ENCODE measurements at regions of chr22 and their contacts with region 1.

Region 1: GRCh38 chr22:24805790-24806662 is at the start of gene SGSM1:
- DNase-seq: peak; percentile 48 to 89 (median 71)
- ATAC-seq: peak; percentile 91
- H3K4me3 ChIP-seq: peak within 1 kb of the TSS; percentile 70
- H3K4me3 Mint-ChIP-seq: peak within 1 kb of the TSS; percentile 75
- H3K27ac ChIP-seq: peak within 1 kb of the TSS; percentile 30 to 46
- H3K27ac Mint-ChIP-seq: peak within 1 kb of the TSS; percentile 2
- H3K4me1 ChIP-seq: peaks cover 4% of the 10 kb centered on the region
- H3K4me1 Mint-ChIP-seq: peaks cover 9% of the 10 kb centered on the region
- H3K27me3 ChIP-seq: no peaks in the 10 kb centered on the region
- H3K27me3 Mint-ChIP-seq: no peaks in the 10 kb centered on the region
- CTCF ChIP-seq: no peak
- total RNA-seq, gene SGSM1: 0.84 to 1.7 TPM

Region 2: GRCh38 chr22:24791362-24791761 is 14.7 kb before region 1 on chr22:
- CTCF ChIA-PET with region 1: interaction called, 21 read pairs
- POLR2A ChIA-PET with region 1: no interaction called
- intact Hi-C with region 1: no loop called
- DNase-seq: no peak
- ATAC-seq: no peak
- H3K4me3 ChIP-seq: no peak overlapping the region
- H3K4me3 Mint-ChIP-seq: no peak overlapping the region
- H3K27ac ChIP-seq: no peak overlapping the region
- H3K27ac Mint-ChIP-seq: no peak overlapping the region
- H3K4me1 ChIP-seq: no peaks in the 10 kb centered on the region
- H3K4me1 Mint-ChIP-seq: no peaks in the 10 kb centered on the region
- H3K27me3 ChIP-seq: no peaks in the 10 kb centered on the region
- H3K27me3 Mint-ChIP-seq: peaks cover 2% of the 10 kb centered on the region
- CTCF ChIP-seq: no peak